ENCODE measurements at regions of chr1 and their contacts with region 1.

Region 1: GRCh38 chr1:185317034-185317885 is at the start of gene IVNS1ABP:
- DNase-seq: peak; percentile 98
- H3K4me3 Mint-ChIP-seq: peak within 1 kb of the TSS; percentile 92
- H3K27ac Mint-ChIP-seq: peak within 1 kb of the TSS; percentile 99
- H3K4me1 Mint-ChIP-seq: peaks cover 49% of the 10 kb centered on the region
- H3K27me3 Mint-ChIP-seq: no peaks in the 10 kb centered on the region
- total RNA-seq, gene IVNS1ABP: 133 to 134 TPM

Region 2: DNA sequence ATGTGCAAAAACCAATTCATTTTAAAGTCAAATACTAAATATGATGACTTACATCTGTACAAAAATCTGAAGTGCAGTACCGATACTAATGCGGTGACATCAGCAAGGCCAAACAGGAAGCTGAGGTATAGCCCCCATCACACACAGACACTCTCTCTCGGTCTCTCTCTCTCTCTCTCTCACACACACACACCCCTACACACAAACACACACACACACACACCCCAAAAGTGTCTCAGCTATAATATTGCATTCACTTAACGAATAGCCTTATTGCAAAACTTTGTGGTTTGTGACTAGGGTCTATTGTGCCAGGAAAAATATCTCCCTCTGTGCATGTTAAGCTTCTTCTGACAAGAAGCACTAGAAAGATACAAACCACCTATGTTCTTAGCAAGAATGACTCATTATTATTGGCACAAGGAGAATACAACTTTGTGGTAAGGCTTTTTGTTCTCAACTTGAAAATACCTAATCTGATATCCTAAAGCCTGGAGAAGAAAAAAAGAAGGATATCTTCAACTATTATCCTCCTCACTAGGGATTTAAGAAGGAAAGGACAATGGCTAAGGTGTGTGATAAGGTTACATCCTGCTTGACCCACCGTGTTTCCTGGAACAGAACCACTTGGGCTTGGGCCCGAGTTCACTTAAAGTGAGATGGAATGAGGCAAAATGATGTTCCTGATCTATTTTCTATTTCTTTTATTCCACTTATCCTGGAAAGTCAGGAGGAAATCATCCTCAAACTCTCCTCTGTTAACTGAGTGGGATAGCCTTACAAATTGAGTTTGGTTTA is 450.1 kb before region 1 on chr1:
- CTCF ChIA-PET with region 1: no interaction called
- POLR2A ChIA-PET with region 1: no interaction called
- intact Hi-C with region 1: loop called (anchors 5 kb)
- DNase-seq: peak; percentile 79
- H3K4me3 Mint-ChIP-seq: peak overlapping the region; percentile 54
- H3K27ac Mint-ChIP-seq: peak overlapping the region; percentile 85
- H3K4me1 Mint-ChIP-seq: peaks cover 52% of the 10 kb centered on the region
- H3K27me3 Mint-ChIP-seq: no peaks in the 10 kb centered on the region

Region 3: DNA sequence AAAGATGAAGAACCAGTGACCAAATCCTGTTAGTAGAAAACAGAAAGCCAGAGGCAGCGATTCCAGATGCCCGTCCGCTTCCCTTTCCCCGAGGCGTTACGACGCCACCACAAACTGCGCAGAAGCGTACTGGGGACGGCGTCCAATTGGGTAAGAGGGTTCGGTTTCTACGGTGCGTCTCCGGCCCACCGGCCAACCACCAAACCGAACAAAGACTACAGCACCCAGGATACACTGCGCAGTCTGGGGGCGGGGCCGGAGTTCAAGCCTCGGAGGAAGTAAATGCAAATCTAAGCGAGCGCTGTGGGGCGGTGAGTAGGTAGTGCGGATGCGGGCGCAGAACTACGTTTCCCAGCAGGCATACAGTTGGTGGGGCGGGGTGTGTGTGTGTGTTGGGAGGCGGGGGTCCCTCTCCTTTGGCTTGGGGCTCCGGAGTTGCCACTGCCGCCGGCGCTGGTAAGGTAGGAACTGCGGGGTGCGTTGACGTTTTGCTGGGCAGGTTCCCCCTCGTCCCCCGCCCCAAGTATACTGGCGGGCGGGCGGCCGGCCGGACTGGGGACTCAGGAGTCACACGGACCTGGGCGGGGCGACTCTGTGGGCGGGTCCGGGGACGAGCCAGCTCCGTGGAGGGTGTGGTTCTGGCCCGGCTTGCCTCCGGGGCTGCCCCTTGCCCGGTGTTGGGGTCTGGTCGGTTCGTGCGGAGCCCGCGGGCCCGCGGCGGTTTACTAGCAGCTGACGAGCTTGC is 160.2 kb before region 1 on chr1 and contains the starts of genes SWT1 and TRMT1L:
- CTCF ChIA-PET with region 1: no interaction called
- POLR2A ChIA-PET with region 1: interaction called, 4 read pairs
- intact Hi-C with region 1: loop called (anchors 1 kb)
- DNase-seq: peak; percentile 99
- H3K4me3 Mint-ChIP-seq: peak within 1 kb of the TSS; percentile 86
- H3K27ac Mint-ChIP-seq: peak within 1 kb of the TSS; percentile 90
- H3K4me1 Mint-ChIP-seq: peaks cover 53% of the 10 kb centered on the region
- H3K27me3 Mint-ChIP-seq: no peaks in the 10 kb centered on the region
- total RNA-seq, gene SWT1: 2.3 to 3.0 TPM
- total RNA-seq, gene TRMT1L: 28.6 to 34.4 TPM

Region 4: DNA sequence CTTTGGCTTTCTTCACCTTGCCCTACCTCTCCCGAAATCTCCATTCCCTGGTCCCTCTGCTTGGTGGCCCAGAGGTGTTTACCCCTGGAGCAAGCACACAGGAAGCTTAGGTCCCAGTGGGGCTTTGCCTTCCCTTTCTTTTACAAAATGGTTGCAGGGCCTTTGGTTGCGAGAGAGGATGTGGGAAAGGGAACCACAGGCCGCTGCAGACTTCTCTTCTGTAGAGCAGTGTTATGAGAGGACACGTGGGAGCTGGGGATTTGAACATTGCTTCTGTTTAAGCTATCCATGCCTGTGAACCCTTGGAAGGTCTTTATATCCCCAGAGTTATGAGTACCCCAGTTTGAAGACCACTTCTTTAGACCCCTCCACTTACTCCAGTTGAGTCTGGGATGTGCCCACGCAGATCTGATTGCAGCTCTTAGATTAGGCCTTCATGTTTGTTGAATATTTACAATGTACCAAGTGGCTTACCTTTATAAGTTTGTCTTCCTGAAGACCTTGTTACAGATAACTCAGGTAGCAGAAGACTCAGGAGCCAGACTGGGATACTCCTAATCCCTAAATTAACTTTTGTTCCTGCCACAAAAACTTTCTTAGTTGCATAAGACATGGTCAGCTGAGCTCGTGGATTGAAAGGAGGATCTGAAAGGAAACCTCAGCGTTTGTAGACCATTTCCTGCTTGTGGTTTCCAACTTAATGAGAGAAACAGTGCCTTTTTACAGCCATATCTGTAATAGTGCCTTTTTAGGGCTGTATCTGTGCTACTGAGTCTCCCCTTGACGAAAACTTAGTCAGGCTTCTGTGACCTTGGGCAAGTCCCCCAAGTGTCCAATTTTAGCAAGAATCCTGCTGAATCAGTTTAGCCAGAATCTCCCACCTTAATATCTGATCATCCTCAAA is 21.7 kb after region 1 on chr1:
- CTCF ChIA-PET with region 1: interaction called, 6 read pairs
- POLR2A ChIA-PET with region 1: interaction called, 3 read pairs
- intact Hi-C with region 1: loop called (anchors 1 kb)
- DNase-seq: peak; percentile 61
- H3K4me3 Mint-ChIP-seq: no peak overlapping the region
- H3K27ac Mint-ChIP-seq: peak overlapping the region; percentile 20
- H3K4me1 Mint-ChIP-seq: peaks cover 23% of the 10 kb centered on the region
- H3K27me3 Mint-ChIP-seq: no peaks in the 10 kb centered on the region

Region 5: DNA sequence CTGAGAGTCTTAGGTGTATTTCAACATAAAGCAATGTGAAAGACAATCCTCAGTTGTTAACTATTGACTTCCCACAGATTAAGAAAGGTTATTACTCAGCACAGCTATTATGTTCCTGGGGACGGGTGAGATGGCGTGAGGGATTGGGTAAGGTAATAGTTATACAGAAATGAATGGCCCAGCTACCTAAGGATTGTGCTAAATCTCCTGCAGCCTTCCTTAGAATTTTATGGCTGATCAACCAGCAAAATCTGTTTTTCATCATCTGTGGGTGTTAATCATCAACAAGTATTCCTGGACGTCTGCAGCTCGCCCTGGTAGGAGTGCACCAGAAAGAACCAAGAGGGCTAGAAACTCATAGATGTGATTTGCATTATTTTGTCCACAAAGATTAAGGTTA is 145.8 kb after region 1 on chr1:
- CTCF ChIA-PET with region 1: no interaction called
- POLR2A ChIA-PET with region 1: no interaction called
- intact Hi-C with region 1: no loop called
- DNase-seq: no peak
- H3K4me3 Mint-ChIP-seq: no peak overlapping the region
- H3K27ac Mint-ChIP-seq: no peak overlapping the region
- H3K4me1 Mint-ChIP-seq: no peaks in the 10 kb centered on the region
- H3K27me3 Mint-ChIP-seq: no peaks in the 10 kb centered on the region

Region 6: GRCh38 chr1:185559684-185560331 is 242.5 kb after region 1 on chr1:
- CTCF ChIA-PET with region 1: interaction called, 4 read pairs
- POLR2A ChIA-PET with region 1: interaction called, 15 read pairs
- intact Hi-C with region 1: loop called (anchors 1 kb)
- DNase-seq: peak; percentile 74
- H3K4me3 Mint-ChIP-seq: no peak overlapping the region
- H3K27ac Mint-ChIP-seq: peak overlapping the region; percentile 69
- H3K4me1 Mint-ChIP-seq: peaks cover 36% of the 10 kb centered on the region
- H3K27me3 Mint-ChIP-seq: no peaks in the 10 kb centered on the region

Region 7: DNA sequence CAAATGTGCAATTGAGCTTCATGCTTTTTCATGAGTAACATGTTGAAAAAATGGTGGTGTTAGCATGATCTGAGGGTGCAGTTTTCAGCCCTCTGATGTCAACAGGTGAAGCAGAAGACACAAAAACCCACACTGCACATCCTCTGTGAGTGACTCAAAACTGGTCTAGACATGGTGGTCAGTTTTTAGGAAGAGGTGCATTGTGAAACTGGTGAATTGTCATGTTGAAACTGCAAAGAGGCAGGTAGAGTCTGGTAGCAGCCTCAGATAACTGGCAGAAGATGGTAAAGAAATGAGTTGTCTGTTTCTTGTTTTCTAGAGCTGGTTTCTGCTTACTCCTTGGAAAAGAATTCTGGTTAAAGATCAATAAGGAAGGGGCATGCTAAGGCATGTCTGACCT is 319.6 kb after region 1 on chr1:
- CTCF ChIA-PET with region 1: interaction called, 3 read pairs
- POLR2A ChIA-PET with region 1: interaction called, 9 read pairs
- intact Hi-C with region 1: loop called (anchors 1 kb)
- DNase-seq: peak; percentile 62
- H3K4me3 Mint-ChIP-seq: no peak overlapping the region
- H3K27ac Mint-ChIP-seq: peak overlapping the region; percentile 83
- H3K4me1 Mint-ChIP-seq: peaks cover 15% of the 10 kb centered on the region
- H3K27me3 Mint-ChIP-seq: peaks cover 3% of the 10 kb centered on the region

Region 8: GRCh38 chr1:186304982-186305949 is 988.0 kb after region 1 on chr1:
- CTCF ChIA-PET with region 1: no interaction called
- POLR2A ChIA-PET with region 1: interaction called, 3 read pairs
- intact Hi-C with region 1: loop called (anchors 10 kb)
- DNase-seq: no peak
- H3K4me3 Mint-ChIP-seq: no peak overlapping the region
- H3K27ac Mint-ChIP-seq: peak overlapping the region; percentile 69
- H3K4me1 Mint-ChIP-seq: peaks cover 54% of the 10 kb centered on the region
- H3K27me3 Mint-ChIP-seq: no peaks in the 10 kb centered on the region

Measured in activated CD4-positive, alpha-beta memory T cell treated with anti-CD3 and anti-CD28 coated beads for 36 hours (primary cell).